Natural killer cell (primary cell): ENCODE measurements at regions of chr6 and their contacts with region 1.

Region 1: GRCh38 chr6:151440930-151441329 is 11.0 kb downstream of the RMND1 start:
- DNase-seq: peak in 1 of 2 donors; percentile 67
- ATAC-seq: peak in 2 of 3 donors; percentile 53 to 57
- H3K4me3 ChIP-seq: no peak overlapping the region
- H3K4me3 Mint-ChIP-seq: peak overlapping the region; percentile 55
- H3K27ac ChIP-seq: peak overlapping the region; percentile 9
- H3K27ac Mint-ChIP-seq: peak overlapping the region; percentile 84 to 85
- H3K4me1 ChIP-seq: peaks cover 6% of the 10 kb centered on the region
- H3K4me1 Mint-ChIP-seq: peaks cover 25 to 33% of the 10 kb centered on the region in 2 donors
- H3K27me3 ChIP-seq: no peaks in the 10 kb centered on the region
- H3K27me3 Mint-ChIP-seq: no peaks in the 10 kb centered on the region
- CTCF ChIP-seq: peak; percentile 62

Region 2: DNA sequence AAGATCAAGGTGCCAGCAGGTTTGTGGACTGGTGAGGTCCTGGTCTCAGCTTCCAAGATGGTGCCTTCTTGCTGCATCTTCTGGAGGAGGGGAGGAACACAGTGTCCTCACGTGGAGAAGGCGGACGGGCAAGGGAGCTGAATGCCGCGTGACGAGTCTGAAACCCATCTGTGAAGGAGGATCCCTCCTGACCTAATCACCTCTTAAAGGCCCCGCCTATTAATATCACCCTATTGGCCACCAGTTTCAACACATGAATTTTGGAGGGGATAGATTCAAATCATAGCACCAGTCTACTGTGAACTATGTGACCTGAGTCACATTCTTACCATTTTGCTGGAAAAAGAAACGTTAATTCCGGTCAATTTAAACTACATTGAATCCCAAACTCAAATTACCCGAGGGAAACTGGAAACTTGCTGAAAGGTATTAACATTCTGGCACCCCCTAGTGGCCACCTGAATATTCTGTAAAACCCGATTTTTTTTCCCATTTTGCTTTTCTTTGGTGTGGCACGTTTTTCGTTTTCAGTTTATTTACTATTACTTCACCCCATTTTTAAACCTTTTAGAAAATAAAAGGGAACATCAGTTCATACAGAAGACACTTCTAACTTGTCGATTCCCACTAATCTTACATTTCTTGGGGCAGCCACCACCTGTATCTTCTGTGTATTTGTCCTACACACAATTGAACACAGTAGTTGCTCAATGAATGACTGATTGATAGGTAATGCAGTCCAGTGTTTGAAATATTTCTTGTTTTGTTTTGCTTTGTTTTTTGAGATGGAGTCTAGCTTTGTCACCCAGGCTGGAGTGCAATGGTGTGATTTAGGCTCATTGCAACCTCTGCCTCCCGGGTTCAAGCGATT is 35.0 kb after region 1 on chr6:
- intact Hi-C with region 1: loop called (anchors 1 kb)
- DNase-seq: peak in 1 of 2 donors; percentile 80
- ATAC-seq: peak in 2 of 3 donors; percentile 51 to 57
- H3K4me3 ChIP-seq: no peak overlapping the region
- H3K4me3 Mint-ChIP-seq: no peak overlapping the region
- H3K27ac ChIP-seq: no peak overlapping the region
- H3K27ac Mint-ChIP-seq: no peak overlapping the region
- H3K4me1 ChIP-seq: peaks cover 4% of the 10 kb centered on the region
- H3K4me1 Mint-ChIP-seq: peaks cover under 1 to 5% of the 10 kb centered on the region in 2 donors
- H3K27me3 ChIP-seq: no peaks in the 10 kb centered on the region
- H3K27me3 Mint-ChIP-seq: no peaks in the 10 kb centered on the region
- CTCF ChIP-seq: peak; percentile 95

Region 3: DNA sequence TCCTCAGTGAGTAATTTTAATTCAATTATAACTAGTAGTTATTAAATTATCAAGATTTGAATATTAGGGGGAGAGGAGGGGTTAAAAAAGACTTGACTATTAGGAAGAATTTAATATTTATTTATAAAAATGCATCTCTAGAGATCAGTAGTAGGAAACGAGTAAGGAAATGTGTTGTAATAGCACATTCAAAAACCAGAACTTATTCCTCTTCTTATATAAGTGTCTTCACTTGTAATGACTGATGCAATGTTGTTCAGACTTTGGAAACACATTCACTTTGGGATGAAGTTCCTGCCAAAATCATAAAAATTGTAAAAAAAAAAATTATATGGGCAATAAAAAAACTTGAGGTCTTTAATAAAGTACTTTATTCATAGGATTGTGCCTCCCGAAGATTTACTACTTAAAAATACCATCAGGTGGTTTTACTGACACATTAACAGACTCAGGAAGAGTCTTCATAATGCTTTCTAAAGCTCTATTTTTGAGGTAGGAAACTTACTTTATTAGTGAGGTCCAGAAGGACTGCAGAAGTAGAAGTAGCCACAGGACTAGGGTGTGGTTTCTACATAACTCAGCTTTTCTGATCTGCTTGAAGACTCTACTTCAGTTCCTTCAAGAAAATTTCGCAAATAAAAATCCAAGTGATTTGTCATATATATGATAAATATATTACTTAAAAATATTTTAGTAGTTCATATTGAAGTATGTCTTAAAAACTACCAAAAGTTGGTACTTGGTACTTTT is 112.7 kb after region 1 on chr6:
- intact Hi-C with region 1: no loop called
- DNase-seq: no peak
- ATAC-seq: no peak
- H3K4me3 ChIP-seq: no peak overlapping the region
- H3K4me3 Mint-ChIP-seq: no peak overlapping the region
- H3K27ac ChIP-seq: no peak overlapping the region
- H3K27ac Mint-ChIP-seq: no peak overlapping the region
- H3K4me1 ChIP-seq: no peaks in the 10 kb centered on the region
- H3K4me1 Mint-ChIP-seq: peaks cover 5 to 8% of the 10 kb centered on the region in 2 donors
- H3K27me3 ChIP-seq: no peaks in the 10 kb centered on the region
- H3K27me3 Mint-ChIP-seq: no peaks in the 10 kb centered on the region
- CTCF ChIP-seq: no peak

Region 4: GRCh38 chr6:152124429-152125074 is 683.6 kb after region 1 on chr6:
- intact Hi-C with region 1: loop called (anchors 2 kb)
- DNase-seq: peak in 1 of 2 donors; percentile 55
- ATAC-seq: peak in 1 of 3 donors; percentile 51
- H3K4me3 ChIP-seq: no peak overlapping the region
- H3K4me3 Mint-ChIP-seq: no peak overlapping the region
- H3K27ac ChIP-seq: no peak overlapping the region
- H3K27ac Mint-ChIP-seq: peak overlapping the region; percentile 44 to 53
- H3K4me1 ChIP-seq: no peaks in the 10 kb centered on the region
- H3K4me1 Mint-ChIP-seq: peaks cover 3 to 4% of the 10 kb centered on the region in 2 donors
- H3K27me3 ChIP-seq: no peaks in the 10 kb centered on the region
- H3K27me3 Mint-ChIP-seq: no peaks in the 10 kb centered on the region
- CTCF ChIP-seq: peak; percentile 56